Lower leg skin (tissue), 4 donors: ENCODE measurements at regions of chr2 and their contacts with region 1.

Region 1: GRCh38 chr2:328761-329160 is 40.9 kb upstream of the ALKAL2 start:
- DNase-seq: no peak
- H3K4me3 ChIP-seq: no peak overlapping the region
- CTCF ChIP-seq: no peak
- POLR2A ChIP-seq: no peak

Region 2: GRCh38 chr2:375270-375955 is 46.7 kb after region 1 on chr2:
- intact Hi-C with region 1: loop called (anchors 2 kb)
- DNase-seq: no peak
- H3K4me3 ChIP-seq: no peak overlapping the region
- CTCF ChIP-seq: no peak
- POLR2A ChIP-seq: no peak

Region 3: DNA sequence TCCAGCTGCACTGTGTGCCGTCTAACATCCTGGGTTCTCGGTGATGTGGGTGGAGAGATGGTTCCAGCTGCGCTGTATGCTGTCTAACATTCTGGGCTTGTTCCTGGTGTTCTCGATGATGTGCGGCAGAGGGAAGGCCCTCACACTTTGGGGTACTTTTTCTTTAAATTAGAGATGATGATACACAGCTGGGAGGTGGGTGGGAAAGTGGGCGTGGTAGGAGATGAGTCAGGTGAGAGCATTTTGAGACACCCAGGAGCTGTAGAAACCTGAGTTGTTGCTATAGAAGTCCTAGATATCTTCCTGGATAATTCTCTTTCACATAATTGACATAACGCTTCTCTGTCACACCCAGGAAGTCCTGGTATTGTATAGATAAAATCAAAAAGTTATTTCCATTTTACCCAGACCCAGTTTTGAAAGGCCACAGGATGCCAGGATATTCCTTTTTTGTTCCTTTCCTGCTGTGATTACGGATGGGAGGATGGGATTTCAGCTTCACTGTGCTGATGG is 63.0 kb after region 1 on chr2:
- intact Hi-C with region 1: no loop called
- DNase-seq: no peak
- H3K4me3 ChIP-seq: no peak overlapping the region
- CTCF ChIP-seq: no peak
- POLR2A ChIP-seq: no peak

Region 4: GRCh38 chr2:419687-420317 is 91.0 kb after region 1 on chr2:
- intact Hi-C with region 1: no loop called
- DNase-seq: peak in 1 of 2 donors; percentile 20
- H3K4me3 ChIP-seq: no peak overlapping the region
- CTCF ChIP-seq: no peak
- POLR2A ChIP-seq: no peak